ENCODE measurements at regions of chr17 and their contacts with region 1.

Region 1: GRCh38 chr17:28925912-28926365 is 23.1 kb upstream of the DHRS13 start:
- DNase-seq: peak; percentile 35 to 93
- ATAC-seq: peak; percentile 86 to 95 (median 93)
- H3K4me3 ChIP-seq: peak overlapping the region; percentile 14
- H3K4me3 Mint-ChIP-seq: peak overlapping the region; percentile 86
- H3K27ac ChIP-seq: peak overlapping the region; percentile 94
- H3K27ac Mint-ChIP-seq: peak overlapping the region; percentile 92 to 100
- H3K4me1 ChIP-seq: peaks cover 42% of the 10 kb centered on the region
- H3K4me1 Mint-ChIP-seq: peaks cover 59 to 64% of the 10 kb centered on the region in 2 donors
- H3K27me3 ChIP-seq: no peaks in the 10 kb centered on the region
- H3K27me3 Mint-ChIP-seq: no peaks in the 10 kb centered on the region
- CTCF ChIP-seq: no peak

Region 2: GRCh38 chr17:28743225-28744103 is 182.5 kb before region 1 on chr17 and contains the start of gene TRAF4:
- intact Hi-C with region 1: loop called (anchors 5 kb)
- DNase-seq: peak; percentile 74 to 91
- ATAC-seq: peak; percentile 90 to 95 (median 94)
- H3K4me3 ChIP-seq: peak within 1 kb of the TSS; percentile 54
- H3K4me3 Mint-ChIP-seq: peak within 1 kb of the TSS; percentile 86
- H3K27ac ChIP-seq: peak within 1 kb of the TSS; percentile 71
- H3K27ac Mint-ChIP-seq: peak within 1 kb of the TSS; percentile 81 to 83
- H3K4me1 ChIP-seq: peaks cover 73% of the 10 kb centered on the region
- H3K4me1 Mint-ChIP-seq: peaks cover 0 to 35% of the 10 kb centered on the region in 2 donors
- H3K27me3 ChIP-seq: no peaks in the 10 kb centered on the region
- H3K27me3 Mint-ChIP-seq: no peaks in the 10 kb centered on the region
- CTCF ChIP-seq: no peak
- total RNA-seq, gene TRAF4: 97.8 to 209 (median 122) TPM

Region 3: GRCh38 chr17:28902819-28903545 is 23.0 kb before region 1 on chr17 and contains the start of gene DHRS13:
- intact Hi-C with region 1: loop called (anchors 2 kb)
- DNase-seq: peak; percentile 92 to 98
- ATAC-seq: peak; percentile 92 to 99 (median 95)
- H3K4me3 ChIP-seq: peak within 1 kb of the TSS; percentile 69
- H3K4me3 Mint-ChIP-seq: peak within 1 kb of the TSS; percentile 83
- H3K27ac ChIP-seq: peak within 1 kb of the TSS; percentile 48
- H3K27ac Mint-ChIP-seq: peak within 1 kb of the TSS; percentile 69 to 84
- H3K4me1 ChIP-seq: peaks cover 30% of the 10 kb centered on the region
- H3K4me1 Mint-ChIP-seq: peaks cover 19 to 47% of the 10 kb centered on the region in 2 donors
- H3K27me3 ChIP-seq: no peaks in the 10 kb centered on the region
- H3K27me3 Mint-ChIP-seq: no peaks in the 10 kb centered on the region
- CTCF ChIP-seq: peak; percentile 99
- total RNA-seq, gene DHRS13: 22.5 to 27.3 (median 23.2) TPM

Region 4: GRCh38 chr17:28982131-28982951 is 56.4 kb after region 1 on chr17:
- intact Hi-C with region 1: loop called (anchors 1 kb)
- DNase-seq: peak; percentile 58 to 92
- ATAC-seq: peak; percentile 82 to 95 (median 91)
- H3K4me3 ChIP-seq: no peak overlapping the region
- H3K4me3 Mint-ChIP-seq: peak overlapping the region; percentile 70
- H3K27ac ChIP-seq: peak overlapping the region; percentile 85
- H3K27ac Mint-ChIP-seq: peak overlapping the region; percentile 97 to 99
- H3K4me1 ChIP-seq: peaks cover 31% of the 10 kb centered on the region
- H3K4me1 Mint-ChIP-seq: peaks cover 18 to 26% of the 10 kb centered on the region in 2 donors
- H3K27me3 ChIP-seq: peaks cover 2% of the 10 kb centered on the region
- H3K27me3 Mint-ChIP-seq: no peaks in the 10 kb centered on the region
- CTCF ChIP-seq: no peak